Activated naive CD4-positive, alpha-beta T cell treated with anti-CD3 and anti-CD28 coated beads for 36 hours (primary cell): ENCODE measurements at regions of chr6 and their contacts with region 1.

Region 1: DNA sequence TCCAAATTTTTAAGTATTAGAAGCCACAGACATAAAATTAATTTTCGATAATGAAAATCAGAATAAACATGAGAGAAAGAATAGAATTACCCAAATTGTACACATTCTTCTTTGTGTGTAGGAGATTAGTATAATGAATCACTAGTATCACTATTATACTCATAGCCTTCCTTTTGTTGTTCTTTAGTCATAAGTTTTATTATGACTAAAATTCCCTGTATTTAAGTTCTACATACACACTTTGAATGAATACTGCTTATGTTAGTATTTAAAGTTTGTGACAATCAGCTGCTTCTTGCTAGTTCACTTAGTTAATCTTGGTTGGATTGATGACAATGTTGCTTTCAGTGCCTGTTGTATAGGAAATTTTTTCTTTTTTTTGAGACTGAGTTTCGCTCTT is 72.7 kb downstream of the CCDC170 start:
- DNase-seq: no peak
- H3K4me3 Mint-ChIP-seq: no peak overlapping the region
- H3K27ac Mint-ChIP-seq: no peak overlapping the region
- H3K4me1 Mint-ChIP-seq: peaks cover 4% of the 10 kb centered on the region
- H3K27me3 Mint-ChIP-seq: peaks cover 9% of the 10 kb centered on the region

Region 2: GRCh38 chr6:151498327-151498726 is 68.2 kb before region 1 on chr6:
- CTCF ChIA-PET with region 1: interaction called, 3 read pairs
- intact Hi-C with region 1: loop called (anchors 2 kb)
- DNase-seq: peak; percentile 18
- H3K4me3 Mint-ChIP-seq: no peak overlapping the region
- H3K27ac Mint-ChIP-seq: no peak overlapping the region
- H3K4me1 Mint-ChIP-seq: peaks cover 15% of the 10 kb centered on the region
- H3K27me3 Mint-ChIP-seq: peaks cover 34% of the 10 kb centered on the region